Activated CD8-positive, alpha-beta T cell treated with anti-CD3 and anti-CD28 coated beads for 36 hours (primary cell): ENCODE measurements at regions of chr15 and their contacts with region 1.

Region 1: GRCh38 chr15:90665288-90666134 is 51.6 kb upstream of the BLM start:
- DNase-seq: peak; percentile 74
- ATAC-seq: peak; percentile 66
- H3K4me3 Mint-ChIP-seq: peak overlapping the region; percentile 77
- H3K27ac Mint-ChIP-seq: peak overlapping the region; percentile 88
- H3K4me1 Mint-ChIP-seq: peaks cover 43% of the 10 kb centered on the region
- H3K27me3 Mint-ChIP-seq: peaks cover 21% of the 10 kb centered on the region
- CTCF ChIP-seq: no peak

Region 2: GRCh38 chr15:90677807-90678790 is 12.6 kb after region 1 on chr15:
- CTCF ChIA-PET with region 1: interaction called, 5 read pairs
- POLR2A ChIA-PET with region 1: interaction called, 25 read pairs
- intact Hi-C with region 1: no loop called
- DNase-seq: no peak
- ATAC-seq: peak; percentile 72
- H3K4me3 Mint-ChIP-seq: peak overlapping the region; percentile 18
- H3K27ac Mint-ChIP-seq: peak overlapping the region; percentile 70
- H3K4me1 Mint-ChIP-seq: peaks cover 26% of the 10 kb centered on the region
- H3K27me3 Mint-ChIP-seq: no peaks in the 10 kb centered on the region
- CTCF ChIP-seq: no peak

Region 3: DNA sequence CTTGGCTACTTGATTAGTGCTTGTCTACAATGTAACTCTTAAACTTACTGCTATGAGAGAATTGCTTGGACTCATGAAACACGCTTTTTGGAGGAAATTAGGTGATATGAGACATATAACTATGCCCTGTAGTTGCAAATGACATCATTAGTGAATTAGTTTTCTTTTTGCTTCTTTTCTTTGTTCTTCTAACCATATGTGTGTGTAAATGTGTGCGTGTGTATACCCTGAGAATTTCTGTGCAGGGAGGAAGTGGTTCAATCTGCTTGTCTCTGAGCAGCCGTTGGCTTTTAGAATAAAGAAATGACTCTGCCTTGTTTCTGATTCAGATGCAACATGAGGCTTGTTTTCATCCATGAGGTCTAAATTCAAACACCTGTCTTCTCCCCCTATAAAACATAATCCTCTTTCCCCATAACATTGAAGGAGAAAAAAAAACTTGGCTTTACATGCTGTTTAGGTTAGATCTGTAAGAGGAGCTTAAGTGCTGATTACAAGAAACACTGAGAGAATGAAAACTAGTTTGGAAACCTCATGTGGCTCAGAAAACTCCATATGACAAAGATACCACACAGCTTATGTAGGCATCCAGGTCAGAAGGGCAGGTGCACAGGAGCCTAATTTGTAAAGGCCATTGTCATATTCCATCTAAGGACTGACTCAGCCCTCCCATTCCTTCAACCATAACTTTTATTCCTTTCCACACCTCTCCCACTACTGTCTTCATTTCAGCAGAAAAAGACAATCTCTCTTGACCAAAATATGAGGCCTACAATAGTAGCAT is 21.1 kb after region 1 on chr15:
- CTCF ChIA-PET with region 1: no interaction called
- POLR2A ChIA-PET with region 1: interaction called, 16 read pairs
- intact Hi-C with region 1: no loop called
- DNase-seq: peak; percentile 60
- ATAC-seq: peak; percentile 95
- H3K4me3 Mint-ChIP-seq: peak overlapping the region; percentile 25
- H3K27ac Mint-ChIP-seq: peak overlapping the region; percentile 97
- H3K4me1 Mint-ChIP-seq: peaks cover 35% of the 10 kb centered on the region
- H3K27me3 Mint-ChIP-seq: no peaks in the 10 kb centered on the region
- CTCF ChIP-seq: no peak

Region 4: GRCh38 chr15:90716976-90717821 is 51.7 kb after region 1 on chr15 and contains the start of gene BLM:
- CTCF ChIA-PET with region 1: interaction called, 3 read pairs
- POLR2A ChIA-PET with region 1: interaction called, 10 read pairs
- intact Hi-C with region 1: no loop called
- DNase-seq: peak; percentile 96
- ATAC-seq: peak; percentile 100
- H3K4me3 Mint-ChIP-seq: peak within 1 kb of the TSS; percentile 84
- H3K27ac Mint-ChIP-seq: peak within 1 kb of the TSS; percentile 96
- H3K4me1 Mint-ChIP-seq: peaks cover 18% of the 10 kb centered on the region
- H3K27me3 Mint-ChIP-seq: no peaks in the 10 kb centered on the region
- CTCF ChIP-seq: no peak
- total RNA-seq, gene BLM: 45.2 to 53.6 TPM